HCT116 (cell line): ENCODE measurements at regions of chr3 and their contacts with region 1.

Region 1: DNA sequence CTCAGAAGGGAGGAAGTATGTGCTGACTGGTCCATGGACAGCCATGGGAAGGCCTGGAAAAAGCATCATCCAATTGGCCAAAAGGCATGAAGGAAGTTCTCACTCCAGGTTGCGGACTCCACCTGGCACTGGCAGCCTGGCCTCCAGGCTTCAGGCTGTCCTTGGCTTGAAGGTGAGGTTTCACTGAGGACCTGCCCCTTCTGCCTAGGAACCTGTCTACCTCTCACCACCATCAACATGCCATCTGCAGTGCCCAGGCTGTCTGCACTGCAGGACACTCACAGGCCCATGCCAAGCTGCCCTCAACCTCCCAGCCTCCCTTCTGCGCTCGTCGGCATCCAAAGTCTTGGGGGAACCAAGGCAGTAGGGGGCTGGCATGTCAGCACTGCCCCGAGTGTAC is 51.1 kb downstream of the CEP70 start:
- DNase-seq: no peak
- ATAC-seq: no peak
- H3K4me3 ChIP-seq: no peak overlapping the region
- H3K27ac ChIP-seq: no peak overlapping the region
- H3K4me1 ChIP-seq: no peaks in the 10 kb centered on the region
- H3K27me3 ChIP-seq: no peaks in the 10 kb centered on the region
- CTCF ChIP-seq: no peak
- POLR2A ChIP-seq: no peak
- RAD21 ChIP-seq: no peak

Region 2: GRCh38 chr3:138442433-138442832 is 100.5 kb before region 1 on chr3:
- CTCF ChIA-PET with region 1: no interaction called
- POLR2A ChIA-PET with region 1: no interaction called
- RAD21 ChIA-PET with region 1: no interaction called
- intact Hi-C with region 1: no loop called
- DNase-seq: peak; percentile 60
- ATAC-seq: peak; percentile 98
- H3K4me3 ChIP-seq: peak overlapping the region in 1 of 2 experiments; percentile 6; a peak in 1 of 4 replicates
- H3K27ac ChIP-seq: no peak overlapping the region
- H3K4me1 ChIP-seq: peaks cover 14 to 18% of the 10 kb centered on the region in 2 experiments
- H3K27me3 ChIP-seq: no peaks in the 10 kb centered on the region
- CTCF ChIP-seq: no peak
- POLR2A ChIP-seq: no peak
- RAD21 ChIP-seq: no peak

Region 3: DNA sequence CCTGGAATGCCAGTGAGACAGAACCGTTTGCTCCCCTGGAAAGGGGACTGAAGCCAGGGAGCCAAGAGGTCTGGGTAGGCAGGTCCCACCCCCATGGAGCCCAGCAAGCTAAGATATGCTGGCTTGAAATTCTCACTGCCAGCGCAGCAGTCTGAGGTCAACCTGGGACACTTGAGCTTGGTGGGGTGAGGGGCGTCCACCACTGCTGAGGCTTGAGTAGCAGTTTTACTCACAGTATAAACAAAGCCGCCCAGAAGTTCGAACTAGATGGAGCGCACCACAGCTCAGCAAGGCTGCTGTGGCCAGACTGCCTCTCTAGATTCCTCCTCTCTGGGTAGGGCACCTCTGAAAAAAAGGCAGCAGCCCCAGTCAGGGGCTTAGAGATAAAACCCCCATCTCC is 17.5 kb after region 1 on chr3:
- CTCF ChIA-PET with region 1: no interaction called
- POLR2A ChIA-PET with region 1: no interaction called
- RAD21 ChIA-PET with region 1: no interaction called
- intact Hi-C with region 1: loop called (anchors 1 kb)
- DNase-seq: no peak
- ATAC-seq: no peak
- H3K4me3 ChIP-seq: no peak overlapping the region
- H3K27ac ChIP-seq: no peak overlapping the region
- H3K4me1 ChIP-seq: no peaks in the 10 kb centered on the region
- H3K27me3 ChIP-seq: no peaks in the 10 kb centered on the region
- CTCF ChIP-seq: no peak
- POLR2A ChIP-seq: no peak
- RAD21 ChIP-seq: no peak

Region 4: DNA sequence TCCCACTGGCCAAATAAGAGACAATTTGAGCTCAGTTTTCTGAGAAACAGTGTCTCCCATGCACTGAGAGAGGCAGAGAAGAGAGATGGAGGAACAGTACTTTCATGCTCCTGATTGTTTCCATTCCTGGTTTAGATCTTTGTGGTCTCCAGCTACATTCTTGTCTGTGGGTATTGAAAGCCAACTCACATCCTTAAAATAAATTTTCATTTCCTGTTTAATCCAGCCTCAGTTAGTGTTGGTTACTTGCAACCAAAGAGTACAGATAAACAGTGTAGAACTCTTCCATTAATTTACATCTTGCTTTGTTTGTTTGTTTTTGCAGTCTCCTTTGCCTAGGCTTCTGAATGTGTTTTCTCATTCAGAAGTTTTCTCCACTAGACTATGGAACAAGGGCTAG is 1268.4 kb after region 1 on chr3:
- CTCF ChIA-PET with region 1: no interaction called
- POLR2A ChIA-PET with region 1: no interaction called
- RAD21 ChIA-PET with region 1: no interaction called
- intact Hi-C with region 1: no loop called
- DNase-seq: no peak
- ATAC-seq: no peak
- H3K4me3 ChIP-seq: no peak overlapping the region
- H3K27ac ChIP-seq: no peak overlapping the region
- H3K4me1 ChIP-seq: no peaks in the 10 kb centered on the region
- H3K27me3 ChIP-seq: peaks cover 51% of the 10 kb centered on the region
- CTCF ChIP-seq: no peak
- POLR2A ChIP-seq: no peak
- RAD21 ChIP-seq: no peak